HEK293 (cell line): ENCODE measurements at regions of chr16 and their contacts with region 1.

Region 1: GRCh38 chr16:67935402-67936123 is 1.1 kb downstream of the PSMB10 start:
- H3K4me3 ChIP-seq: peak overlapping the region; percentile 92
- H3K27ac ChIP-seq: peak overlapping the region; percentile 69
- H3K4me1 ChIP-seq: no peaks in the 10 kb centered on the region
- CTCF ChIP-seq: peak; percentile 18; the same call in 1 of the 2 replicates

Region 2: DNA sequence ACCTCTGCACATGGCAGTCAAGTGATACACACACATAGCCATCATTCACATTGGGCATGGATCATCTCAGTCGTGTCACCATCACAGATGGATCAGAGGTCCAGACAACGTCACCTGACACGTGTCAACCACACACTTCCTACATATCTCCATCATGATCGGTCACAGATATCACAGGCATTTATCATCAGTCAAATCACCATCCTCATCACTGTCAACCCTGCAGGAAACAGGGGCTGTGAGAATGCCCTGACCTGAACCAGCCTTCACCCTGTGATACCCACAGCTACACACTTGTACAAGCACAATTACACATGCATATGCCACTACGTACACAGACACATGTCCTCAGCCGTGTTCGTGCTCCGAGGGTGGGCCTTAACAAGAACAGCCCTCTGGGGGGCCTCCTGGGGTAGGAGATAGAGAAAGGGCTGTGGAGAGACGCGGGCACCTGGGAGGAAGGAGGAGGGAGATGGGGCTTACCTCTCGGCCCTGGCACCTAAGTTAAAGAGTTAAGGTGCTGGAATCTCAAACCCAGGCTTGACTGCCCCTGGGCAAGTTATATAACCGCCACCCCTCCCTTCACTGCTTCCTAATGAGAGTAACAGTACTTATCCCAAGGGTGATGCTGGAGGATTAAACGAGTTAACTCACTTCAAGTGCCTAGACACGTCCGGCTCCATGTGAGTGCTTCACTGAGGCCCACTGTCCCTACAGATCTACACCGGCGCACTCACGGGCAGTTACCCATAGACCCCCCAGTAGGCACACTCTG is 31.8 kb after region 1 on chr16:
- CTCF ChIA-PET with region 1: no interaction called
- POLR2A ChIA-PET with region 1: interaction called, 13 read pairs
- H3K4me3 ChIP-seq: peak overlapping the region; percentile 68
- H3K27ac ChIP-seq: peak overlapping the region; percentile 80; the same call in 1 of the 2 replicates
- H3K4me1 ChIP-seq: no peaks in the 10 kb centered on the region; the same call in none of the 2 replicates
- CTCF ChIP-seq: no peak

Region 3: DNA sequence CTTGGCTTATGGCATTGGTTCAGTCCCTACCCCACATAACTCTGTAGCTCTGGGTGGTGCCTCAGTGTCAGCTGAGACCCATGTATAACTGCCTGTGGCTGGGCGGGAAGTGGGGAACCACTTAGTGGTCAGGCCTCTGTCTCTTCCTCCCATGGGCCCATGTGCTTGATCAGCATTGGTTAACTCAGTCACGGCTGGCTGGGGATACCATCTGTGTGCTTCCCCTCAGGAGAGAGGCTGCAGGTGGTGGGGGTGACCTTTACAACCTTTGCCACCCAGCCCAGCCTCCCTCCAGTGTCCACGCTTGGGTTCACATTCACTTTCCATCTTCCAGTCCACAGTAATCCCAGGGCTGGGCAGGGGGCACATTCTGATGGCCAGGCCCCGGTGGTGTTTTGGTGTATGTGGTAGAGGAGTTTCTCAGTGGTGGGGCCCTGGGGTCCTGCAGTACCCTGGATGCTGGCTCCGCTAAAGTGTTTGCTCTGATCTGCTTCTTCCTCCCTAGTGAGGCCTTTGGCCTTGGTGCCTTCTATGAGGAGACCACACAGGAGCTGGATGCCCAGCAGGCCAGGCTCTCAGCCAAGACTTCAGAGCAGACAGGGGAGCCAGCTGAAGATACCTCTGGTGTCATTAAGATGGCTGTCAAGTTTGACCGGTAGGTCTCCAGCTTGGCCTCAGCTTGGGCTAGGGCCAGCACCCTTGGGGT is 139.4 kb after region 1 on chr16:
- CTCF ChIA-PET with region 1: no interaction called
- POLR2A ChIA-PET with region 1: no interaction called
- H3K4me3 ChIP-seq: no peak overlapping the region
- H3K27ac ChIP-seq: no peak overlapping the region
- H3K4me1 ChIP-seq: no peaks in the 10 kb centered on the region
- CTCF ChIP-seq: no peak

Region 4: DNA sequence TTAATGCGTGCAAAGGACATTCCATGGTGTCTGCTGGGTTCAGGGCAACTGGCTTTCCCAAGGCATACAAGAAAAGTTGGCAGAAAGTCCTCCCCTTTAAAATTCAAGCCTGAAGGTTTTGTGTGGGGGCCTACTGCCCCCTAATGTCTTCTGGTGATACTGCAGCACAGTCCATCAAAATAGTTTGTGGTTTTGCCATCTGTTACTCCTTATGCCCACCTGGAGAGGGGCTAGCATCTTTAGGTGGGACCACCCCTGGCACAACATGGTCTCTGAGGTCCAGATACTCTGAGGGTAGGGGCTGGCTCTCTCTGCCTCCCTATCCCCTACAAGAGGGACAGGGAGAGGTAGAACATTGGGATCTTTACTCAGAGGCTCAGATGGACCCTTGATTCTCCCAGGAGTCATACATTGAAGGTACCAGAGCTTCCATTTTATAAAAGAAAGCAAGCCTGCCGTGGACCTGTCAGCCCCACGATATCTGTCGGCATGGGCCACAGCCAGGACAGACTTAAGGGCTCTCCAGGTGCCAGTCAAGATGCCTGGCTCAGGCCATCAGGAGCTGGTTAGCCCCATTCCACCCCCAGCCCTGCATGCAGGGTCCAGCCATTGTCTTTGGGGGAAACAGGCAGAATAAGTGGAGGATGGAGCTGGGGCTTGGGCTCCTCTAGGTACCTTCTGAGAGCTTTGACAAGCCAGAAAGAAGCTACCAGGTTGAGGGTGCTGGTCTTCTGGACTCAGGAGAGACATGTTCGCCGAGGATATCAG is 294.1 kb after region 1 on chr16:
- CTCF ChIA-PET with region 1: no interaction called
- POLR2A ChIA-PET with region 1: no interaction called
- H3K4me3 ChIP-seq: no peak overlapping the region
- H3K27ac ChIP-seq: no peak overlapping the region
- H3K4me1 ChIP-seq: no peaks in the 10 kb centered on the region
- CTCF ChIP-seq: peak; percentile 86